Activated naive CD4-positive, alpha-beta T cell treated with anti-CD3 and anti-CD28 coated beads for 36 hours (primary cell): ENCODE measurements at regions of chr4 and their contacts with region 1.

Region 1: GRCh38 chr4:118076958-118077766 is 42.9 kb downstream of the NDST3 start:
- DNase-seq: peak; percentile 16
- H3K4me3 Mint-ChIP-seq: no peak overlapping the region
- H3K27ac Mint-ChIP-seq: no peak overlapping the region
- H3K4me1 Mint-ChIP-seq: no peaks in the 10 kb centered on the region
- H3K27me3 Mint-ChIP-seq: peaks cover 7% of the 10 kb centered on the region

Region 2: DNA sequence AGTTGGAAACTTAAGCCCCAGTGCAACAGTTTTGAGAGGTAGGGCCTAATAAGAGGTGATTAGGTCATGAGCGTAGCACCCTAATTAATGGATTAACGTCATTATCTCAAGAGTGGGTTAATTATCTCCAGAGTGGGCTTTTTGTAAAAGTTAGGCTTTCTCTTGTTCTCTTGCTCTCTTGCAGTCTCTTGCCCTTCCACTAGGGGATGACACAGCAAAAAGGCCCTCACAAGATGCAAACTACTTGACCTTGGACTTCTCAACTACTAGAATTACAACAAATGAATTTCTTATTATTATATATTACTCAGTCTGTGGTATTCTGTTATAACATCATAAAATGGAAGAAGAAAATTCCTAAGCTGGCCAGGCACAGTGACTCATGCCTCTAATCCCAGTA is 65.0 kb before region 1 on chr4:
- CTCF ChIA-PET with region 1: no interaction called
- intact Hi-C with region 1: loop called (anchors 10 kb)
- DNase-seq: no peak
- H3K4me3 Mint-ChIP-seq: no peak overlapping the region
- H3K27ac Mint-ChIP-seq: no peak overlapping the region
- H3K4me1 Mint-ChIP-seq: no peaks in the 10 kb centered on the region
- H3K27me3 Mint-ChIP-seq: no peaks in the 10 kb centered on the region

Region 3: GRCh38 chr4:118099106-118099505 is 21.9 kb after region 1 on chr4:
- CTCF ChIA-PET with region 1: interaction called, 10 read pairs
- intact Hi-C with region 1: no loop called
- DNase-seq: no peak
- H3K4me3 Mint-ChIP-seq: no peak overlapping the region
- H3K27ac Mint-ChIP-seq: no peak overlapping the region
- H3K4me1 Mint-ChIP-seq: no peaks in the 10 kb centered on the region
- H3K27me3 Mint-ChIP-seq: no peaks in the 10 kb centered on the region